ENCODE measurements at regions of chr10 and their contacts with region 1.

Region 1: GRCh38 chr10:79562135-79562756 is 2.0 kb upstream of the SFTPA2 start:
- DNase-seq: peak; percentile 53
- CTCF ChIP-seq: peak; percentile 87

Region 2: DNA sequence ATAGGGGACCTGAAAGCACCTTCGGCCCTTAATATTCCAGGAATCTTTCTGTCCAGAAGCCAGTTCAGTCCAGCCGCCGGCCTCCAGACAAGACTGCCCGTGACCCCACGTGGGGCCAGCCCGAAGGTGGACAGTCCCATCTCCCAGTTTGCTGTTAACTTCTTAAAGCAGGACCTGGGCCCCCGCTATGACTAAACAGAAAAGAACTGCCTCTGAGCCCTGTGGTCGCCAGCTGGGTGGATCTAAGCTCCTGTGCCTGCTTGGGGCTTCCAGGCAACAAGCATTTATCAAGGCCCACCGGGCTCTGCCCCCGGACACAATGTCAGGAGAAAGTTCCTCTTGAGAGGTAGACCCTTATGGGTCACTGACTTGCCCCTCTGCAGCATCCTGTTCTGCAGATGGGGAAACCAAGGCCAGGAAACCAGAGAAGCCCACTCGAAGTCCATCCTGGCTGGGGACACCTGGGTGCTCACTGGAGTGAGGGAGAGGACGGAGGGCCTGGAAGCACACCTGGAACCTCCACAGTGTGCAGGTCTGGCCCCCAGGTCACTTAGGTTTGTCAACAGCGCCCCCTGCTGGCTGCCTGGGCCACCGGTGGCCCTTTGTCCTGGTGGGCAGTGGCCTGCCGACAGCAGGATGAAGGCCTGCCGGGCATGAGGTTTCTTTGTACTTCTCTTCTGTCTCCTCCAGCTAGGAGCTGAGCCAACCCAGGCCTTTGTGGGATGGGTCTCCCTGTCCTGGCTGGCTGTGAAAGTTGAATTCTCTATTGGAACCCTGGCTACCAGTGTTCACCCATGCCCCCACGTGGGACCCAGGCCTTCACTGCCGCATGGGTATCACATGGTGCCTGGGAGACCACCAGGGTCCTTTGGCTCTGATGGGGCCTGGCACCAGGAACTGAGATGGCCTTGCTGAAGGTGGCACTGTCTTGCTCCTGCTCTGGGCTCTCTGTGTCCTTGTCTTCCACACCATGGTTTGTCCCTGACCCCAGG is 365.5 kb before region 1 on chr10:
- in situ Hi-C with region 1: no loop called
- DNase-seq: peak; percentile 83
- CTCF ChIP-seq: peak; percentile 96

Region 3: DNA sequence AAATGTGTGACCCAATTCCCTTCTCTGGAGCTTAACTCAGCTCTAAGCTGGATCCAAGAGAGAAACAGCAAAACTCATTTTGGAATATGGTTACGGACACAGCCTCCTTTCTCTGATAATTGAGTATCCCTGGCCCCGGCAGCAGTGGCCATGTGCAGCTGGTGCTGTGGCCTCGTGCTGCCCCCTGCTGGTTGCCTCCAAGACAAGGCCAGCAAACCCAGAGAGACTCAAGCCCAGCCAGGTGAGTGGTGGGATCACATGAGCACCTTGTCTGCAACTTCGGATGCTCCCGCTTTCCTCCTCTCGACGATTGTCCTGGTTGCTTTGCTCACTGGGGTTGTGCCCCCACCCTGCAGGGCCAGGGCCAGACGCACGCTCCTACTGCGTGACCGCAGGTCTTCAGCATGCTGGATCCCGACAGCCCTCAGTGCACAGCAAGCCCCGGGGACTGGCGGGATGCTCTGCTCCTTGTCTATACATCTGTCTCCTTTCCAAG is 367.2 kb after region 1 on chr10:
- in situ Hi-C with region 1: loop called (anchors 25 kb)
- DNase-seq: peak; percentile 74
- CTCF ChIP-seq: peak; percentile 95

Measured in GM13977 (cell line).